Activated CD8-positive, alpha-beta T cell treated with anti-CD3 and anti-CD28 coated beads, Interleukin-2, amount 10 ng/mL, durations not matched to agents 7 days and 5 days (primary cell): ENCODE measurements at regions of chr4 and their contacts with region 1.

Region 1: DNA sequence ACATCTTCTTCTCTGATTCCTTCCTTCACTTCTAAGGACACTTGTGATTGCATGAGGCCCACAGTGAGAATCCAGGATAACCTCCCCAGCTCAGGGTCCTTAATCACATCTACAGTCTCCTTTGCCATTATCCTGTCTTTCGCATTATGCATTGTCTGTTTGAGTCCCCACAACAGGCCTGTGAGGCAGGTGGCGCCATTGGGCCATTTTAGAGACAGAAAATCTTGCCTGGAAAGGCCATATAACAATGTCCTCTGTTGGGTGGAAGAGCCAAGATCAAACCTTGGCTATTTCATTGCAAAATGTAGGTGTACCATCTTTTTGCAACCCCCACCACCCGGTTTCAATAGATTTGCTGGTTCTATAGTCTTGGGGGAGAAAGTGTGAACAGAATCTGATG is 11.8 kb upstream of the DCUN1D4 start:
- DNase-seq: peak; percentile 68
- ATAC-seq: peak; percentile 63
- H3K4me3 Mint-ChIP-seq: no peak overlapping the region
- H3K27ac Mint-ChIP-seq: no peak overlapping the region
- H3K4me1 Mint-ChIP-seq: no peaks in the 10 kb centered on the region
- H3K27me3 Mint-ChIP-seq: peaks cover 20% of the 10 kb centered on the region

Region 2: GRCh38 chr4:51820443-51821234 is 10.5 kb before region 1 on chr4:
- CTCF ChIA-PET with region 1: no interaction called
- POLR2A ChIA-PET with region 1: no interaction called
- DNase-seq: no peak
- ATAC-seq: no peak
- H3K4me3 Mint-ChIP-seq: no peak overlapping the region
- H3K27ac Mint-ChIP-seq: no peak overlapping the region
- H3K4me1 Mint-ChIP-seq: no peaks in the 10 kb centered on the region
- H3K27me3 Mint-ChIP-seq: no peaks in the 10 kb centered on the region

Region 3: DNA sequence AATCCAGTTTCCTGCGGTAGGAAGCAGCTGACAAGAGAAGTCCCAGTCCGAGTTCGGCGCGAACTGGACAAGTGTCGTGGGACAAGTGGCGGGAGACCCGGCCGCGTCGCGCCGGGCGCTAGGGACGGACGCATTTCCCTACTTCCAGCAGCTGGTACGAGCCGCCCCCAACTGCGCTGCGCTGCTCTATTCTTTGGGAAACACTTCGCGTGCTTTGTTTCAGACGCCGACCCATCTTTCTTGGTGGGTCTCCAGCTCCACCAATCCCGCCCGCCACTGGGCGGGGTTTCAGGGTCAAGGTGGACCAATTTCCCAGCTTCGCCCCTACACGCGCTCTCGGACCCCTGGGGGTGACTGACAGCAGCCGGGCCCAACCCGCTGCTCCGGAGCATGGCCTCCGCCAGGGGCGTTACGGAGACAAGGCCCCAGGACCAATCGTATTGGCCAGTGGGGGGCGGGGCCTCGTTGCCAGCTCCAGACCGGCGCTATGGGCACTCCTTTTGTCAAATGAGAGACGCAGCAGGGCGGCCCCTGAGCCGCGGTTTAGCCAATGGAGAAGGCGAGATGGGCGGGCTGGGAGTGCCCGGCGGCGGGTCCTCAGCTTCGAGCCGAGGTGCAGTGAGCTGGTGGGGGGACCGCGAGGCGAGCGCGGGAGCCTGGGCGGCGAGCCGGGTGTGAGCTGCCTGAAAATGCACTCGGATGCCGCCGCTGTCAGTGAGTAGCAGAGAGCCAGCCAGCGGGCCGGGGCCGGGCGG is 11.6 kb after region 1 on chr4 and contains the start of gene DCUN1D4:
- CTCF ChIA-PET with region 1: interaction called, 10 read pairs
- POLR2A ChIA-PET with region 1: no interaction called
- DNase-seq: peak; percentile 99
- ATAC-seq: peak; percentile 93
- H3K4me3 Mint-ChIP-seq: peak within 1 kb of the TSS; percentile 88
- H3K27ac Mint-ChIP-seq: peak within 1 kb of the TSS; percentile 93
- H3K4me1 Mint-ChIP-seq: peaks cover 16% of the 10 kb centered on the region
- H3K27me3 Mint-ChIP-seq: peaks cover 2% of the 10 kb centered on the region
- total RNA-seq, gene DCUN1D4: 31.9 to 34.9 TPM